Activated CD8-positive, alpha-beta T cell treated with anti-CD3 and anti-CD28 coated beads for 36 hours (primary cell): ENCODE measurements at regions of chr15 and their contacts with region 1.

Region 1: GRCh38 chr15:72685925-72686794 is at the starts of genes BBS4 and HIGD2B:
- DNase-seq: peak; percentile 94
- ATAC-seq: peak; percentile 97
- H3K4me3 Mint-ChIP-seq: peak within 1 kb of the TSS; percentile 95
- H3K27ac Mint-ChIP-seq: peak within 1 kb of the TSS; percentile 91
- H3K4me1 Mint-ChIP-seq: peaks cover 16% of the 10 kb centered on the region
- H3K27me3 Mint-ChIP-seq: no peaks in the 10 kb centered on the region
- CTCF ChIP-seq: no peak
- total RNA-seq, gene BBS4: 10.8 to 11.4 TPM
- total RNA-seq, gene HIGD2B: 0.27 to 0.32 TPM

Region 2: GRCh38 chr15:72358650-72359288 is 327.4 kb before region 1 on chr15:
- CTCF ChIA-PET with region 1: no interaction called
- POLR2A ChIA-PET with region 1: no interaction called
- intact Hi-C with region 1: no loop called
- DNase-seq: peak; percentile 39
- ATAC-seq: peak; percentile 45
- H3K4me3 Mint-ChIP-seq: no peak overlapping the region
- H3K27ac Mint-ChIP-seq: peak overlapping the region; percentile 22
- H3K4me1 Mint-ChIP-seq: peaks cover 9% of the 10 kb centered on the region
- H3K27me3 Mint-ChIP-seq: no peaks in the 10 kb centered on the region
- CTCF ChIP-seq: no peak

Region 3: GRCh38 chr15:72671535-72671934 is 14.6 kb before region 1 on chr15:
- CTCF ChIA-PET with region 1: interaction called, 13 read pairs
- POLR2A ChIA-PET with region 1: no interaction called
- intact Hi-C with region 1: no loop called
- DNase-seq: no peak
- ATAC-seq: no peak
- H3K4me3 Mint-ChIP-seq: no peak overlapping the region
- H3K27ac Mint-ChIP-seq: no peak overlapping the region
- H3K4me1 Mint-ChIP-seq: peaks cover 5% of the 10 kb centered on the region
- H3K27me3 Mint-ChIP-seq: peaks cover 10% of the 10 kb centered on the region
- CTCF ChIP-seq: no peak